BJ (cell line): ENCODE measurements at regions of chr10 and their contacts with region 1.

Region 1: GRCh38 chr10:128011175-128011979 is 104.5 kb downstream of the PTPRE start:
- DNase-seq: no peak
- H3K4me3 ChIP-seq: no peak overlapping the region
- H3K27me3 ChIP-seq: no peaks in the 10 kb centered on the region; the same call in 1 of the 2 replicates
- CTCF ChIP-seq: peak; percentile 98

Region 2: GRCh38 chr10:127906548-127907377 is 104.6 kb before region 1 on chr10 and contains the start of gene PTPRE:
- CTCF ChIA-PET with region 1: interaction called, 100 read pairs
- POLR2A ChIA-PET with region 1: no interaction called
- DNase-seq: no peak
- H3K4me3 ChIP-seq: peak within 1 kb of the TSS; percentile 28
- H3K27me3 ChIP-seq: no peaks in the 10 kb centered on the region
- CTCF ChIP-seq: peak; percentile 28; the same call in 1 of the 2 replicates
- polyA plus RNA-seq, gene PTPRE: 0.09 and 0.12 TPM in 2 replicates

Region 3: DNA sequence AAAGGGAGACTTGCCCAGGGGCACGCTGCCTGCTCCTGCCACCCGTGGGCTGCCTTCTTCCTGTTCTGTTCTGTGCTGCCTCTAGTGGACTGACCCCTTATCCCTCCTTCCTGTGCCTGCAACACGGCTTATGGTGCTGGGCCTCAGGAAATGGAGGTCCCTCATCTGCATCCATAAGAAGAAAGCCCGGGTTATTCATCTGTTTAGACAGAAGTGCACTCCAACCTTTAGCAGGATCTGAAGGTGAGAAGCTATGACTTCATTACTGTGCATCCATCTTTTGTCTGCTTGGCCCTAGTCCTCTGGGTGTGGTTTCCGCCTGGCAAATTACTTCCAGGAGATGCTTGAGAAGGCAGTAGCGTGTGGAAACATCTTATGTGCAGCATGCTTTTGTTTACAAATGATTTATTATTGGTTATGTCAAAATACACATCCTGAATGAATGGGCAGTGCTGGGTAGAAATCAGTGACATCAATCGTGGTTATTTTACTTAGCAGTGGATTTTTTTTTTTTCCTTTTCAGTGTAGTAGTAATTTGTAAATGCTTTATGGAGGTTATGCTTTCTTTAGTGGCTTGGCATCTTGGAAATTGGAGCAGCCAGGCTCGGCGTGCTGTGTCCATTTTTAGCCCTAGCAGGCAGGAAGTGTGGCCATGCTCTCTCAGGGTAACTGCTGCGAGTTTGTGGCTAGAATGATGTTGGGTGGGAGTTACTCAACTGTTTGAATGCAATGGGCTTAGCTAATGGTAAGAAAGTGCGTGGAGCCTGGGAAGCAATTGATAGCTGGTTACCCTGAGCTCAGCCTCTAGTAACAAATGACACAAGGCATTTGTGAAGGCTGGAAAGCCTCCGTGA is 91.7 kb before region 1 on chr10:
- CTCF ChIA-PET with region 1: interaction called, 13 read pairs
- POLR2A ChIA-PET with region 1: no interaction called
- DNase-seq: no peak
- H3K4me3 ChIP-seq: no peak overlapping the region
- H3K27me3 ChIP-seq: no peaks in the 10 kb centered on the region
- CTCF ChIP-seq: 0 out of 2 replicates have a peak, but pooled peaks have one; percentile 14